Psoas muscle (tissue), 8 donors: ENCODE measurements at regions of chr1 and their contacts with region 1.

Region 1: GRCh38 chr1:246617768-246618167 is 51.5 kb downstream of the CNST start:
- DNase-seq: no peak
- ATAC-seq: peak; percentile 57 to 97 (median 94)
- H3K4me3 ChIP-seq: peak overlapping the region; percentile 35
- H3K27ac ChIP-seq: peak overlapping the region; percentile 70
- H3K4me1 ChIP-seq: peaks cover 28% of the 10 kb centered on the region
- H3K27me3 ChIP-seq: no peaks in the 10 kb centered on the region
- CTCF ChIP-seq: no peak

Region 2: GRCh38 chr1:246537887-246538286 is 79.9 kb before region 1 on chr1:
- intact Hi-C with region 1: no loop called
- DNase-seq: no peak
- ATAC-seq: peak in 1 of 4 donors; percentile 22
- H3K4me3 ChIP-seq: no peak overlapping the region
- H3K27ac ChIP-seq: no peak overlapping the region
- H3K4me1 ChIP-seq: peaks cover 5% of the 10 kb centered on the region
- H3K27me3 ChIP-seq: no peaks in the 10 kb centered on the region
- CTCF ChIP-seq: no peak

Region 3: DNA sequence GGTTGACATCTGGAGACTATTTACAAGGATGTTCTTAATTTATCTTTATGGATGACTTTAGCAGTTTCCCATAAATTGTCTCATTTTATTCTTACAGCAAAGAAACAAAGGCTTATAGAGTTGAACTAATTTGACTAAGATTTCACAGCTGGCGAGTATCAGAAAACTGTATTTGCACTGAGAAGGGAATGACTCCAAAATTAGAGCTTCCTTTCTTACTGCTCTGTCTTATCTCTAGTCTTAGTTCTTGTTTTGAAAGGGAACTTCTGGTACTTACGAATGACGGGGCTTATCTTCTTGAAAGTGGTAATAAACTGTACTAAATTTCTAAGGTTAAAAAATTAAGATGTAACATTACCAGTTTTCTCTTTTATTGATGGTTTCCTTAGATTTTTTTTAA is 38.0 kb before region 1 on chr1:
- intact Hi-C with region 1: loop called in 1 of 2 experiments (anchors 5 kb)
- DNase-seq: no peak
- ATAC-seq: no peak
- H3K4me3 ChIP-seq: no peak overlapping the region
- H3K27ac ChIP-seq: no peak overlapping the region
- H3K4me1 ChIP-seq: peaks cover 60% of the 10 kb centered on the region
- H3K27me3 ChIP-seq: no peaks in the 10 kb centered on the region
- CTCF ChIP-seq: no peak

Region 4: DNA sequence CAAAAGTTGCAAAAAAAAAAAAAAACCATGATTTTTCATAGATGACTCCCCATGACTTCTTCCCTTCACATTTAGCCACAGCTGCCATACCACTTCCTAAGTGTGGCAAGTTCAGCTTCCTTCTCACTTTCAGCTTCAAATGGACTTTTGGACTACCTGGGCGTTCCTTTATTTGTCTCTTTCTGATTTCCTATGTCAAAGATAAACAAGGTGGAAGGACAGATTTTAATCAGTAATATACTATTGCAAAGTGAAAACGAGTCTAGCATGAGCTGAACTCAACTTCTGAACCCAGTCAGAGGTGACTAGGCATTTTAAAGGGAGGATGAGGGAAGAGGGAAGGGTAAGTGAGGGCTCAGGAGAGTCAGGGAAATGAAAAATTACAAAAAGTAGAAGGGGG is 92.1 kb after region 1 on chr1:
- intact Hi-C with region 1: no loop called
- DNase-seq: no peak
- ATAC-seq: no peak
- H3K4me3 ChIP-seq: no peak overlapping the region
- H3K27ac ChIP-seq: no peak overlapping the region
- H3K4me1 ChIP-seq: no peaks in the 10 kb centered on the region
- H3K27me3 ChIP-seq: no peaks in the 10 kb centered on the region
- CTCF ChIP-seq: no peak